T-cell (primary cell): ENCODE measurements at regions of chr17 and their contacts with region 1.

Region 1: DNA sequence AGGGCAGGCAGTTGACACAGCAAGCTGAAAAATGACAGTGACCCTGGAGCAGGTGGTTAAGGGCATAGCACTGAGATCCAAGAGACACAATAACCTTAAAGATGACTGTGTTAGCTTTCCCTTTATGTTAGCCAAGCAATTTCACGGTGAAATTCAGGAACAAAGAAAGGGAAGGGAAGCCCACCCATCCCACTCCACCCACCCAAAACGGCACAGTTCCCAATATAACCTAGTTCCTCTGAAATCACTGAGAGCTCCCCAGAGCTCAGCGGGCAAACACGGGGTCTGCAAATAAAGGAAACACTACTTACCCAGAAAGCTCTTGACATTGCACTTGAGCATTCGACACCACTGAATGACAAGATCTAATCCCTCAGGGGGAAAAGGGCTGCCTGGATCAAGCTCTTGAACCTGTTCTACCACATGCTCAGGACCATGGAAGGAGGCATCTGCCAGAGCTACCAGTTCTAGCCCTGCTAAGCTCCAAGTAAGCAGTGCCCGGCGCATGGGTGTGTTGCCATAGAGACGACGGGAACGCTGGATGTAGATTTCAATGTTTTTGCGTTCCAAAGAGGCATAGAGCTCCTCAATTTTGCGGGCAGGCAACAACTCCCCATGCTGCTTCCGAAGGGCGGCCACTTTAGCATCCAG is 10.6 kb downstream of the BLTP2 start:
- DNase-seq: no peak
- ATAC-seq: no peak
- H3K4me3 ChIP-seq: no peak overlapping the region
- H3K4me3 Mint-ChIP-seq: no peak overlapping the region
- H3K27ac ChIP-seq: no peak overlapping the region
- H3K27ac Mint-ChIP-seq: no peak overlapping the region
- H3K4me1 ChIP-seq: peaks cover 0 to 6% of the 10 kb centered on the region in 2 experiments
- H3K4me1 Mint-ChIP-seq: peaks cover 14 to 35% (median 23%) of the 10 kb centered on the region in 3 donors
- H3K27me3 ChIP-seq: no peaks in the 10 kb centered on the region
- H3K27me3 Mint-ChIP-seq: no peaks in the 10 kb centered on the region

Region 2: DNA sequence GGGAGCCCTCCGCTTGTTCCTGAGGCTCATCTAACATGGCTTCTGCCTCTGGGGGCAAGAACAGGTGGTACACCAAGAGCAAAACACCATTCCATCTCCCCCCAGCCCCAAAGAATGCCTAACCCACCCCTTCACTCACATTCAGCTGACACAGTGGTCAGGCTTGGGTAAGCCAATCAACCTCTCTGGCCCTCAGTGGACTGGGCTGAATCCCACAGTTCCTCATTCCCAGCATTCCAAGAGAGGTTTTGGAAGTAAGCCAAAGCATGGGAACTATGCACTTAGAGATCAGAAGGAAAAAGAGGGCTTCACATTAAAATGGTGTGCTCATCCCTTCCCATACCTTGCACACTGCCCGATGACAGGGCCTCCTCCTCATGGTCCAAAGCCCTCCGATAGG is 70.9 kb before region 1 on chr17:
- CTCF ChIA-PET with region 1: no interaction called
- POLR2A ChIA-PET with region 1: no interaction called
- DNase-seq: no peak
- ATAC-seq: no peak
- H3K4me3 ChIP-seq: no peak overlapping the region
- H3K4me3 Mint-ChIP-seq: no peak overlapping the region
- H3K27ac ChIP-seq: no peak overlapping the region
- H3K27ac Mint-ChIP-seq: no peak overlapping the region
- H3K4me1 ChIP-seq: peaks cover 0 to 3% of the 10 kb centered on the region in 2 experiments
- H3K4me1 Mint-ChIP-seq: peaks cover 22 to 24% (median 23%) of the 10 kb centered on the region in 3 donors
- H3K27me3 ChIP-seq: no peaks in the 10 kb centered on the region
- H3K27me3 Mint-ChIP-seq: no peaks in the 10 kb centered on the region

Region 3: GRCh38 chr17:28622186-28622585 is 12.1 kb before region 1 on chr17:
- CTCF ChIA-PET with region 1: no interaction called
- POLR2A ChIA-PET with region 1: interaction called in 1 of 2 experiments, 10 read pairs
- DNase-seq: no peak
- ATAC-seq: no peak
- H3K4me3 ChIP-seq: no peak overlapping the region
- H3K4me3 Mint-ChIP-seq: no peak overlapping the region
- H3K27ac ChIP-seq: no peak overlapping the region
- H3K27ac Mint-ChIP-seq: no peak overlapping the region
- H3K4me1 ChIP-seq: no peaks in the 10 kb centered on the region
- H3K4me1 Mint-ChIP-seq: peaks cover 0 to 6% (median 0%) of the 10 kb centered on the region in 3 donors
- H3K27me3 ChIP-seq: no peaks in the 10 kb centered on the region
- H3K27me3 Mint-ChIP-seq: no peaks in the 10 kb centered on the region

Region 4: GRCh38 chr17:28661635-28662537 is 27.6 kb after region 1 on chr17 and contains the starts of genes SDF2 and SUPT6H:
- CTCF ChIA-PET with region 1: no interaction called
- POLR2A ChIA-PET with region 1: no interaction called
- DNase-seq: peak; percentile 88 to 98 (median 94)
- ATAC-seq: peak; percentile 88 to 89 (median 88)
- H3K4me3 ChIP-seq: peak within 1 kb of the TSS; percentile 80 to 88
- H3K4me3 Mint-ChIP-seq: peak within 1 kb of the TSS; percentile 93 to 100 (median 98)
- H3K27ac ChIP-seq: peak within 1 kb of the TSS; percentile 95
- H3K27ac Mint-ChIP-seq: peak within 1 kb of the TSS; percentile 100
- H3K4me1 ChIP-seq: peaks cover 30 to 43% of the 10 kb centered on the region in 2 experiments
- H3K4me1 Mint-ChIP-seq: peaks cover 62 to 67% (median 63%) of the 10 kb centered on the region in 3 donors
- H3K27me3 ChIP-seq: no peaks in the 10 kb centered on the region
- H3K27me3 Mint-ChIP-seq: no peaks in the 10 kb centered on the region
- total RNA-seq, gene SDF2: 25.3 to 45.8 (median 43.9) TPM
- total RNA-seq, gene SUPT6H: 89.2 to 129 (median 95.7) TPM

Region 5: DNA sequence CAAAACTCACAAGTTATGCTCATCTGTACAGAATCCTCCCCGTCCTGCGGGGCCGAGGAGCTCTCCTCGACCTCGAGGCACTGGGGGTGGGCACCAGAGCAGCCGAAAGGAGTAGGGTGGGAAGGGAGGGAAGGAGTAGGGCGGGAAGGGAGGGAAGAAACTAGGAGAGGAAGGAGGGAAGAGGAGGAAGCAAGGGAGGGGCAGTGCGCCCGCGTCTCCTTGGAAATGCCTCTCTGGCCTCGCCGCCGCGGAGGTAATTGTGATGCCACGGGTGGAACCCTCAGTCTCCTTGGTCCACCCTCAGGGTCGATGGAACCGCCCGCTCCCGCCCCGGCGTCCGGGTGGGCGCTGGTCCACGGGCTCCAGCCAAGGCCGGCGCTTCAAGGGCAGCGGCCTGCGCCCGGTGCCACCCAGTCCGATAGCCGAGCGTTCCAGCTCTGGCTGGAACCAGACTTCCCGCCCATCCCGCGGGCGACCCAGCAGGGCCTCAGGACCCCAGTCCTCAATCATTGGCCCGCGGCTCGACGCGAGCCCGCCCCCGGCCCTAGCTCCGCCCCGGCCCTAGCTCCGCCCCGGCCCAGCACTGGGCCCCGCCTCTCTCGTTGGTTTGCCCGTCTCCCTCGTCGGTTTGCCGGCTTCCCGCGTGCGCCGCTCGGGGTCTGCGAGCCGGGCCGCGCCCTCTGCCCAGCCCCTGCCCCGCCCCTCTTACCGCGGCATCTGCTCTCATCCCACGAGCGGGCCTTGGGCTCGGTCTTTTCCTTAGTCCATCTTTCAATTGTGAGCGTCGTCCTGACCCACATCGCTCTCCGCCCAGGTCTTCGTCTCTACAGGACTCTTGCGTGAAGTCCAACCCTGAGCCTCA is 76.8 kb after region 1 on chr17:
- CTCF ChIA-PET with region 1: no interaction called
- POLR2A ChIA-PET with region 1: no interaction called
- DNase-seq: peak; percentile 68 to 89 (median 82)
- ATAC-seq: peak; percentile 91 to 93 (median 92)
- H3K4me3 ChIP-seq: peak overlapping the region; percentile 64 to 69
- H3K4me3 Mint-ChIP-seq: peak overlapping the region; percentile 82 to 92 (median 84)
- H3K27ac ChIP-seq: peak overlapping the region; percentile 76
- H3K27ac Mint-ChIP-seq: peak overlapping the region; percentile 91
- H3K4me1 ChIP-seq: peaks cover 0 to 26% of the 10 kb centered on the region in 2 experiments
- H3K4me1 Mint-ChIP-seq: peaks cover 9 to 19% (median 15%) of the 10 kb centered on the region in 3 donors
- H3K27me3 ChIP-seq: peaks cover 0 to 19% of the 10 kb centered on the region in 2 experiments
- H3K27me3 Mint-ChIP-seq: peaks cover 6 to 13% of the 10 kb centered on the region in 2 donors